ENCODE measurements at regions of chr20 and their contacts with region 1.

Region 1: DNA sequence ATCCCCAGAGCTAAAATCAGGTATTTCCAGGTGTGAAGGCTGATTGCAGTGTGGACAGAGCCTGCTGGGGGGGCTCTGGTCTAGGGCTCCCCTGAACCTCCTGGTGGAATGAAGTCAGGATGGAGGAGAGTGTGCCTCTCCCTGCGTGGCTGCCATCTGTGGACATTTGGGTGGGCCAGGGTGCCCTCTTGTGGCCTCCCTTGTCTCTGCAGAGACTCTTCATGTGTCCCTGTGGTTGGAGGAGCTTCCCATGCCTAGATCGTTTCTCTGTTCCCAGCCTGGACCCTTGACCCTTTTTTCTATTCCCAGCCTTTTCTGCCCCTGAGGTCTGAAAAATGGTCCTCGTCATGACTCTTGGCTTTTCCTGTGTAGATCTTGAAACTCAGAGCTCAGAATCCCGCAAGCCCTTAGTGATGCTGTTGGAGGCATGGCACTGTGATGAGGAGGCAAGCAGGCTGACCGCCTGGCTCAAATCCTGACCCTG is 9.9 kb upstream of the PSMF1 start:
- DNase-seq: peak; percentile 58
- ATAC-seq: peak; percentile 76
- H3K4me3 ChIP-seq: no peak overlapping the region
- H3K4me3 Mint-ChIP-seq: no peak overlapping the region
- H3K27ac ChIP-seq: no peak overlapping the region
- H3K27ac Mint-ChIP-seq: no peak overlapping the region
- H3K4me1 ChIP-seq: peaks cover 0 to 4% of the 10 kb centered on the region in 2 donors
- H3K4me1 Mint-ChIP-seq: peaks cover 2% of the 10 kb centered on the region
- H3K27me3 ChIP-seq: peaks cover 0 to 6% (median 0%) of the 10 kb centered on the region in 4 experiments
- H3K27me3 Mint-ChIP-seq: no peaks in the 10 kb centered on the region
- CTCF ChIP-seq: peak; percentile 81

Region 2: DNA sequence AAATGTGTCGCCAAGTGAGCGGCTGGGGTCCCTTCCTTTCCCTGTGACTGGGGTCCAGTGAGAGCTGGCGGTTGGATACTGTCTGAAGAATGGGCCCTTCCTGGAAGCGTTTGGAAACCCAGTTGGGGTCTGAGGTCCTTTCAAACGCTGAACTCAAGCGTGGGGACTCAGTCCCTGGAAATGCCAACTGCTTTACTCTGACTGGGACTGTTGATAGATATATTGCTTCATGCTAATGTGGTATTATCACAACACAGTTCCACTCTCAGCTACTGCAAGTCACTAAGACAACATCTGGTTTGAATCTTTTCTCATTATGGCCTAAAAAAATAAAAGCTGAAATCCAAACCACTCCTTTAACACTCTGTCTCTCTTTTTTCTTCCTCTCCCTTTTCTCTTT is 13.7 kb before region 1 on chr20:
- CTCF ChIA-PET with region 1: interaction called, 24 read pairs
- POLR2A ChIA-PET with region 1: no interaction called
- intact Hi-C with region 1: no loop called
- DNase-seq: no peak
- ATAC-seq: no peak
- H3K4me3 ChIP-seq: no peak overlapping the region
- H3K4me3 Mint-ChIP-seq: no peak overlapping the region
- H3K27ac ChIP-seq: no peak overlapping the region
- H3K27ac Mint-ChIP-seq: no peak overlapping the region
- H3K4me1 ChIP-seq: no peaks in the 10 kb centered on the region
- H3K4me1 Mint-ChIP-seq: no peaks in the 10 kb centered on the region
- H3K27me3 ChIP-seq: no peaks in the 10 kb centered on the region
- H3K27me3 Mint-ChIP-seq: no peaks in the 10 kb centered on the region
- CTCF ChIP-seq: no peak

Region 3: DNA sequence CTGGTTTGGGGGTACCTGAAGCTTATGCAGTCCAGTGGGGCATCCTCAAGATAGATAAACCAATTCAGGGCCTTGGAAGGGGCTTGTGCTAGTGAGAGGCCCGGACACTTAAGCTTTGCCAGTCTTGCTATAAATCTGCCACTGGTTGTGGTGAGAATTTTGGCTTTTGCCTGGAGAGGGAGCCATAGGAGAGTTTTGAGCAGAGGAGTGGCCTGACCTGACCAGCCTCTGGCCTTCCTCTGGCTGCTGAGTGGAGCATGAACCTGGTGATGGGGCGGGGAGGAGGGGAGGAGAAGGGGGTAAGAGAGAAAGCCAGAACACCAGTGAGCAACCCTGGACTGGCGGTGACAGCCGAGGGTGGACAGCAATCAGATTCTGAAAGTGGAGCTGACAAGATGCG is 69.2 kb after region 1 on chr20:
- CTCF ChIA-PET with region 1: no interaction called
- POLR2A ChIA-PET with region 1: no interaction called
- intact Hi-C with region 1: no loop called
- DNase-seq: no peak
- ATAC-seq: no peak
- H3K4me3 ChIP-seq: no peak overlapping the region
- H3K4me3 Mint-ChIP-seq: no peak overlapping the region
- H3K27ac ChIP-seq: no peak overlapping the region
- H3K27ac Mint-ChIP-seq: no peak overlapping the region
- H3K4me1 ChIP-seq: no peaks in the 10 kb centered on the region
- H3K4me1 Mint-ChIP-seq: no peaks in the 10 kb centered on the region
- H3K27me3 ChIP-seq: peaks cover 0 to 3% (median 0%) of the 10 kb centered on the region in 4 experiments
- H3K27me3 Mint-ChIP-seq: peaks cover 4% of the 10 kb centered on the region
- CTCF ChIP-seq: no peak

Region 4: DNA sequence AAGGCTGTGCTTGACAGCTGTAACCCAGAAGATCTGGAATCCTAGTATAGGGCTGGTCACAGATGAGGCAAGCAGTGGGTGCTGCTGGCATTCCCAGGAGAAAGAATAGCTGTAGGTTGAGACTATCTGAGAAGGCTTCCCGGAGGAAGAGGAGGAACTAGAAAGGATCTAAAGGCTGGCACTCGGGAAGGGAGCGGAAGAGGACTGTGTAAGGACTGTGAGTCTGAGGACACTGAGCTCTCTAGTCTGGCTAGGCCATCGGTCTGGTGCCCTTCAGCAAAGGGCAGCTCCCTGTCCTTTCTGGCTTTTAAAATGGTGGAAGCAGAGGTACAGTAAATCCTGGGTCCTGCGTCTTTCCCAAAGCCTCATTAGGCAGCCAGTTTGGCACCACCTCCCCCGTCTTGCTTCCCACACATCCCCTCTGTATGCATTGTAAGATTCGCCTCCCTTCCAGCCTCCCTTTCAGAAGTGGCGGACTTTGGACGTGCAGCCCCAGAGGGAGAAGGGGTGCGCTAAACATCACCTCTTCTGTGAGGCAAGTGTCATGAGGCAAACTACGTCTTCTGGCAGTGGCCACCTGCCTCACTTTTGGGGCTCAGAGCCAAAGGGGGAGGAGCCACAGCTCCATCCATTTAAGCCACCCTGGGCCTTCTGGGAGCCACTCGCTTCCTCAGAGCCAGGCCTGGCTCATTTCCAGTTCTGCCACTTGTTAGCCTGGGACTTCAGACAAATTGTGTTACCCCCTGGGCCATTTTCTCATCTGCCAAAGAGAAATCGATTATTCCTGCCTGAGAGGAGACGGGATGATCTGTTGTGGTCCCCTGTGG is 166.2 kb after region 1 on chr20:
- CTCF ChIA-PET with region 1: no interaction called
- POLR2A ChIA-PET with region 1: no interaction called
- intact Hi-C with region 1: no loop called
- DNase-seq: no peak
- ATAC-seq: no peak
- H3K4me3 ChIP-seq: no peak overlapping the region
- H3K4me3 Mint-ChIP-seq: no peak overlapping the region
- H3K27ac ChIP-seq: no peak overlapping the region
- H3K27ac Mint-ChIP-seq: no peak overlapping the region
- H3K4me1 ChIP-seq: no peaks in the 10 kb centered on the region
- H3K4me1 Mint-ChIP-seq: peaks cover 3% of the 10 kb centered on the region
- H3K27me3 ChIP-seq: no peaks in the 10 kb centered on the region
- H3K27me3 Mint-ChIP-seq: no peaks in the 10 kb centered on the region
- CTCF ChIP-seq: no peak

Measured in B cell (primary cell).